Activated CD4-positive, alpha-beta T cell treated with anti-CD3 and anti-CD28 coated beads for 36 hours (primary cell): ENCODE measurements at regions of chr1 and their contacts with region 1.

Region 1: GRCh38 chr1:39086865-39087409 is 60.8 kb downstream of the NDUFS5 start:
- DNase-seq: no peak
- ATAC-seq: no peak
- H3K4me3 Mint-ChIP-seq: no peak overlapping the region
- H3K27ac Mint-ChIP-seq: no peak overlapping the region
- H3K4me1 Mint-ChIP-seq: peaks cover 3% of the 10 kb centered on the region
- H3K27me3 Mint-ChIP-seq: peaks cover 23% of the 10 kb centered on the region

Region 2: DNA sequence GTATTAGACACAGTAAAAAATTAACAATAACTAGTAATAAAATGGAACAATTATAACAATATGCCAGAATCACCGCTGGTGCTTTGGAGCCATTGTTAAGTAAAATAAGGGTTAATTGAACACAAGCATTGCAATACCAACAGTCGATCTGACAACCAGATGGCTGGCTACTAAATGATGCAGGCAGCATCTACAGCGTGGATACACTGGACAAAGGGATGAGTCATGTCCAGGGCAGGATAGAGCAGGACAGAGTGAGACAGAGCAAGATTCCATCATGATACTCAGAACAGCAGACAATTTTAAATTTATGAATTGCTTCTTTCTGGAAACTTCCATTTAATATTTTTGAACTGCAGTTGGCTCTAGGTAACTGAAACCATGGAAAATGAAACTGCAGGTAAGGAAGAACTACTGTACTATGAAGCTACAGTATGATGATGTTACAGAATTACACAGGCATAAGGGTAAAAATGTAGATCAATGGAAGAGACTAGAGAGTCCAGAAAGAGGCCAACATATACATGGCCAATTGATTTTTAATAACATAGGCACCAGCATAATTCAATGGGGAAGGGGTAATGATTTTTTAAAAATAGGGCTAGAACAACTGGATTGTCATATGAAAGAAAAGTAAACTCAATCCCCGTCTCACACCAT is 396.0 kb before region 1 on chr1:
- CTCF ChIA-PET with region 1: no interaction called
- POLR2A ChIA-PET with region 1: no interaction called
- intact Hi-C with region 1: no loop called
- DNase-seq: no peak
- ATAC-seq: no peak
- H3K4me3 Mint-ChIP-seq: no peak overlapping the region
- H3K27ac Mint-ChIP-seq: no peak overlapping the region
- H3K4me1 Mint-ChIP-seq: no peaks in the 10 kb centered on the region
- H3K27me3 Mint-ChIP-seq: peaks cover 24% of the 10 kb centered on the region

Region 3: GRCh38 chr1:39044762-39045161 is 42.2 kb before region 1 on chr1:
- CTCF ChIA-PET with region 1: interaction called, 6 read pairs
- POLR2A ChIA-PET with region 1: no interaction called
- intact Hi-C with region 1: loop called in 1 of 2 experiments (anchors 5 kb)
- DNase-seq: no peak
- ATAC-seq: no peak
- H3K4me3 Mint-ChIP-seq: no peak overlapping the region
- H3K27ac Mint-ChIP-seq: no peak overlapping the region
- H3K4me1 Mint-ChIP-seq: peaks cover 3% of the 10 kb centered on the region
- H3K27me3 Mint-ChIP-seq: no peaks in the 10 kb centered on the region